Esophagus muscularis mucosa (tissue), 4 donors: ENCODE measurements at regions of chr2 and their contacts with region 1.

Region 1: DNA sequence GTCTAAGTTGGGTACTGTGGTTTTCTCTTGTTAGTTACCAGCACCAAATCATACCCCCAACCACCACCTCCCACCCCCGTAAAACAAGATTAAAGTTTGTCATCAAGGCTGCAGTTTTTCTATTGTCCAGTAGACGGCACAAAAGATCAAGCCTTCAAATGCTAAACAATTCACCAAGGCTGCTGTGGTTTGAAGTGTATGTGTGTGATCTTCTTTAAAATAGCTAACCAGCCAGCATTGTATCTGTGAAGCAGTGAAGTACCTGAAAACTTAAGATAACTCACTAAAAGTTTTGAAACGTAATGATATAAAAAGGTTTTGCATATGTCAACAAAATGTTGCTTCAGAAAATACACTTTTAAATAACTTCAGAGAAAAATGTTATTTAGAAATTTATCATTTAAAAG is 5.9 kb upstream of the MEIS1 start:
- DNase-seq: no peak
- H3K4me3 ChIP-seq: peak overlapping the region in 2 of 4 donors; percentile 7 to 18
- H3K27ac ChIP-seq: peak overlapping the region; percentile 78 to 94 (median 83)
- H3K4me1 ChIP-seq: peaks cover 8 to 78% (median 72%) of the 10 kb centered on the region in 4 donors
- H3K27me3 ChIP-seq: peaks cover 0 to 13% (median 0%) of the 10 kb centered on the region in 4 donors
- CTCF ChIP-seq: peak; percentile 87 to 93 (median 88)
- EP300 ChIP-seq: no peak
- POLR2A ChIP-seq: no peak

Region 2: GRCh38 chr2:65640793-65641103 is 788.3 kb before region 1 on chr2:
- intact Hi-C with region 1: loop called (anchors 5 kb)
- DNase-seq: no peak
- H3K4me3 ChIP-seq: peak overlapping the region in 1 of 4 donors; percentile 48
- H3K27ac ChIP-seq: no peak overlapping the region
- H3K4me1 ChIP-seq: peaks cover 0 to 20% (median 19%) of the 10 kb centered on the region in 4 donors
- H3K27me3 ChIP-seq: no peaks in the 10 kb centered on the region
- CTCF ChIP-seq: no peak
- EP300 ChIP-seq: no peak
- POLR2A ChIP-seq: no peak

Region 3: DNA sequence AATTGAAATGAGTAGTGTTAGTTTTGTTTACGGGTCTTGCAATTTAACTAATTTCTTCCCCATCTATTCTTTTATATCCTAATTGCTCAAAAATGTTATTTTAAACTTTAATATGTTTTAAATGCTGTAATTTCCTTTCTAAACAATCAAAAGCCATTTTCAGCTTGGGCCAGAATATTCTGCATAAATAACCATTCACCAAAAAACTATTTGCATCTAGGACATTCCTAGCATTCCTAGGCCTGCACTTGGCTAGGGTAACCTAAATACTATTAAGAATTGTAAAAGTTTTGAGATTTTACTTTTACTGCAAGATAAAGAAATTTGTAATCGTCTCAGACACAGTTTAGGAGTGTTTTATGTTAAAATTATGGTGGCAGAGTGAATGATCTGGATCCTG is 960.2 kb after region 1 on chr2:
- intact Hi-C with region 1: loop called (anchors 5 kb)
- DNase-seq: no peak
- H3K4me3 ChIP-seq: no peak overlapping the region
- H3K27ac ChIP-seq: peak overlapping the region; percentile 48 to 67 (median 64)
- H3K4me1 ChIP-seq: peaks cover 0 to 26% (median 22%) of the 10 kb centered on the region in 4 donors
- H3K27me3 ChIP-seq: no peaks in the 10 kb centered on the region
- CTCF ChIP-seq: no peak
- EP300 ChIP-seq: no peak
- POLR2A ChIP-seq: no peak

Region 4: GRCh38 chr2:67476809-67477790 is 1048.0 kb after region 1 on chr2:
- intact Hi-C with region 1: loop called (anchors 10 kb)
- DNase-seq: no peak
- H3K4me3 ChIP-seq: no peak overlapping the region
- H3K27ac ChIP-seq: no peak overlapping the region
- H3K4me1 ChIP-seq: peaks cover 0 to 19% (median 14%) of the 10 kb centered on the region in 4 donors
- H3K27me3 ChIP-seq: no peaks in the 10 kb centered on the region
- CTCF ChIP-seq: peak; percentile 46 to 57 (median 49)
- EP300 ChIP-seq: no peak
- POLR2A ChIP-seq: no peak